Activated CD8-positive, alpha-beta memory T cell treated with anti-CD3 and anti-CD28 coated beads, Interleukin-2, amount 10 ng/mL, durations not matched to agents 7 days and 5 days (primary cell): ENCODE measurements at regions of chr19 and their contacts with region 1.

Region 1: DNA sequence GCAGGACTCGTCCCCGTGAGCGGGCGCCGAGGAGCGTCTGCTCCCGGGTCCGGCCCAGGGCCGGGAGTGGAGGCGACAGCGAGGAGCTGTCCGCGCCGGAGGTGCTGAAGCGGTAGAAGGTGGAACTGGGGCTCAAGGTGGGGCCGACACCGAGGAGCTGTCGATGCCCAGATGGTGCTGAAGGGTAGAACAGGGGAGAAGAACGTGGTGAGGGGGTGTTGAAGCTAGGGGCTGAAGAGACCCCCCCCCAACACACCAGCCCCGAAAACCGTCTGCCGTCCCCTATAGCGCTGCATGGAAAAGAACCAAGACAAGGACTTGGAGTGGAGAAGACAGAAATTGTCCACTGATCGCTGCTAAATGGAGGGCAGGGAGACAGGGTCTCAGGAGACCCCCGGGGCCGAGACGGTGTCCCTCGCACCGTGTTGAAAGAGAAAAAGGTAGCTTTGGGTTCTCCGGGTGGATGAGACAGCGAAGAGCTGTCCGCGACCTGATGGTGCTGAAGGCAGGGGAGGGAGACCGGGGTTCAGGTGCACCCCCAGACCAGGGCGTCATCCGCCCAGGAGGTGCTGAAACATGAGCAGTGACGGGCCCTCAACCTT is 7.1 kb upstream of the PDE4C start:
- DNase-seq: peak; percentile 72
- ATAC-seq: peak; percentile 85
- H3K4me3 Mint-ChIP-seq: no peak overlapping the region
- H3K27ac Mint-ChIP-seq: no peak overlapping the region
- H3K4me1 Mint-ChIP-seq: peaks cover 4% of the 10 kb centered on the region
- H3K27me3 Mint-ChIP-seq: peaks cover 54% of the 10 kb centered on the region

Region 2: DNA sequence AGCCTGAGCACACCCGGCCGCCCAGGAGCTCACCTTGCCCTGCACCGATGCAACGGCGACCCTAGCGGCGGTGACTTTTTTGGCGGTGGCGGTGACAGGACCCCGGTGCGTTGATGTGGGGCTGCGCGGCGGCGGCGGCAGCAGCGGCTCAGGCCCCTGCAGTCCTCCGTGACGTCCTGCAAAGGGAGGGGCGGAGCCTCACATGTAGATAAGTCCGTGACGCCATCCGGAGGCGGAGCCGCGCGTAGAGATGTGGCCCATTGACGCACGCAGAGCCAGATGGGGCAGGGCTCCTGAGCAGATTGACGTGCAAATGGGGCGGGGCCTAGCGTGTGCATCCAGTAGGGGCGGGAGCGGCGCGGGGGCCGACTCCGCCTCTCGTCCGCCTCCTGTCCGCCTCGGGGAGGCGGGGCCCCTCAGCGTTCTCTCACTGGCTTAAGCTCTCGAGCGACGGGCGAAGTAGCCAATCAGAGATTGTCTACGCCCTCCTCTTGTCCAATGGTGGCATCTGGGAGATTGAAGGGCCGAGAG is 29.4 kb before region 1 on chr19 and contains the start of gene RAB3A:
- CTCF ChIA-PET with region 1: interaction called, 13 read pairs
- DNase-seq: peak; percentile 100
- ATAC-seq: peak; percentile 93
- H3K4me3 Mint-ChIP-seq: peak within 1 kb of the TSS; percentile 83
- H3K27ac Mint-ChIP-seq: peak within 1 kb of the TSS; percentile 91
- H3K4me1 Mint-ChIP-seq: peaks cover 17% of the 10 kb centered on the region
- H3K27me3 Mint-ChIP-seq: peaks cover 5% of the 10 kb centered on the region
- total RNA-seq, gene RAB3A: 3.5 to 3.7 TPM

Region 3: GRCh38 chr19:18218159-18218558 is 15.2 kb before region 1 on chr19:
- CTCF ChIA-PET with region 1: no interaction called
- DNase-seq: no peak
- ATAC-seq: no peak
- H3K4me3 Mint-ChIP-seq: no peak overlapping the region
- H3K27ac Mint-ChIP-seq: no peak overlapping the region
- H3K4me1 Mint-ChIP-seq: peaks cover 10% of the 10 kb centered on the region
- H3K27me3 Mint-ChIP-seq: peaks cover 24% of the 10 kb centered on the region